IMR-90 (cell line): ENCODE measurements at regions of chrX and their contacts with region 1.

Region 1: DNA sequence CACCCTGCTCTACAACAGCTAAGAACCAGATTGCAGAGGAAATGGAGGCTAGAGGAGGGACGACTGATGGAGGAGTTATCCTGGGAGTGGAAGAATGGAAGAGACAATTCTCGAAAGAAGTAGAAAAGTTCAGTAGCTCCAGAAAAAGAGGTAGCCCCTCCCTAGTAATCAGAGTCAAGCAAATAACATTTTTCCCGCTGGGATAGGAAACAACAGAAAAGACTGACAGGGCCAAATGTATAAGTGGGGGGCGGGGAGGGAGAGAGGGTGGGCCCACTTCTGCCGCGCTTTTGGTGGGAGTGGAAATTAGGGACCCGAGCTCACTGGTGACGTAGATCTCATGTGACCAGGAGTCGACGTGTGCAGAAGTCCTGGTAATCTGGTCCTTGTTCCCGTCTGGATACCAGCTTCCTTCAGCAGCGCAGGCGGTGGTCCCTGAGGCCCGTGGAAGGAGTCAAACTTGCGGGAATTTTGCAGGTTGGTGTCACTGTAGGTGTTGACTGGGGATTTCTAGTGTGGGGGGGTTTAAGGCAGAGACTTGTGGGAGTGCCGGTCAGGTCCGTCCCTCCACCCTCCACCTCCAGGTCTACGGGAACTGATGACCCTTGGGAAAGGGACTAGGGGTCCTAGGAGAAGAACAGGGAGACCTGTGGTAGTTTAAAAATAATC is at the start of gene TCEAL9:
- DNase-seq: peak; percentile 83
- ATAC-seq: peak; percentile 81
- H3K4me3 ChIP-seq: peak within 1 kb of the TSS; percentile 94
- H3K27ac ChIP-seq: peak within 1 kb of the TSS; percentile 87
- H3K4me1 ChIP-seq: peaks cover 3% of the 10 kb centered on the region; the same call in 1 of the 2 replicates
- H3K27me3 ChIP-seq: no peaks in the 10 kb centered on the region
- CTCF ChIP-seq: no peak
- POLR2A ChIP-seq: peak; percentile 92
- RAD21 ChIP-seq: no peak
- total RNA-seq, gene TCEAL9: 20.3 and 94.4 TPM in 2 replicates

Region 2: DNA sequence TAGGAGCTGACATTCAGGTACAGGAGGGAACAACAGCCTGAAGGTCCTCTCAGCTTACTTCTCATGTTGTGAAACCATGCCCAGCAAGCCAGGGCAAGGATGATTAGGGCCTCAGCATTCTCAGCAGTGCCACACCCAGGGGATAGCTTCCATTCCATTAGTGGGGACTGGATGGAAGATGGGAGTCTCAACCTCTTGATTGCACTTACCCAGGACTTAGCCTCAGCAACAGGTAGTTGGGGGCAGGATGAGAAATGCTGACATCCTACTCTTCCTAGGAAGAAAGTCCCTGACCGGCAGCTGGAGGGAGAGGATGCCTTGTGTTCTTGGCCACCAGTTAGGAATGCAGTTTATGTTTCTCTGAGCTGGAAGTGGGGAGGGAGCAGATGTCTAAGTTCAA is 11.2 kb after region 1 on chrX:
- CTCF ChIA-PET with region 1: interaction called, 3 read pairs
- POLR2A ChIA-PET with region 1: interaction called, 15 read pairs
- dilution Hi-C with region 1: no loop called
- in situ Hi-C with region 1: no loop called
- intact Hi-C with region 1: no loop called
- DNase-seq: peak; percentile 52
- ATAC-seq: peak; percentile 81
- H3K4me3 ChIP-seq: no peak overlapping the region
- H3K27ac ChIP-seq: peak overlapping the region; percentile 95
- H3K4me1 ChIP-seq: peaks cover 6% of the 10 kb centered on the region
- H3K27me3 ChIP-seq: peaks cover under 1% of the 10 kb centered on the region; the same call in 1 of the 2 replicates
- CTCF ChIP-seq: no peak
- POLR2A ChIP-seq: no peak
- RAD21 ChIP-seq: no peak

Region 3: GRCh38 chrX:103376979-103377324 is 20.7 kb after region 1 on chrX:
- CTCF ChIA-PET with region 1: no interaction called
- POLR2A ChIA-PET with region 1: interaction called, 4 read pairs
- dilution Hi-C with region 1: no loop called
- in situ Hi-C with region 1: no loop called
- intact Hi-C with region 1: loop called (anchors 1 kb)
- DNase-seq: peak; percentile 27
- ATAC-seq: peak; percentile 59
- H3K4me3 ChIP-seq: peak overlapping the region; percentile 88
- H3K27ac ChIP-seq: peak overlapping the region; percentile 99
- H3K4me1 ChIP-seq: peaks cover 3% of the 10 kb centered on the region
- H3K27me3 ChIP-seq: peaks cover 2% of the 10 kb centered on the region; the same call in 1 of the 2 replicates
- CTCF ChIP-seq: no peak
- POLR2A ChIP-seq: no peak
- RAD21 ChIP-seq: no peak

Region 4: GRCh38 chrX:103431316-103431715 is 75.1 kb after region 1 on chrX:
- CTCF ChIA-PET with region 1: no interaction called
- POLR2A ChIA-PET with region 1: no interaction called
- dilution Hi-C with region 1: no loop called
- in situ Hi-C with region 1: no loop called
- intact Hi-C with region 1: no loop called
- DNase-seq: peak; percentile 61
- ATAC-seq: peak; percentile 75
- H3K4me3 ChIP-seq: no peak overlapping the region
- H3K27ac ChIP-seq: peak overlapping the region; percentile 54
- H3K4me1 ChIP-seq: peaks cover 3% of the 10 kb centered on the region; the same call in 1 of the 2 replicates
- H3K27me3 ChIP-seq: no peaks in the 10 kb centered on the region; the same call in 1 of the 2 replicates
- CTCF ChIP-seq: no peak
- POLR2A ChIP-seq: no peak
- RAD21 ChIP-seq: no peak